ENCODE measurements at regions of chr2 and their contacts with region 1.

Region 1: GRCh38 chr2:222572751-222573174 is 83.1 kb downstream of the FARSB start:
- DNase-seq: no peak
- H3K4me3 Mint-ChIP-seq: no peak overlapping the region
- H3K27ac Mint-ChIP-seq: peak overlapping the region; percentile 54
- H3K4me1 Mint-ChIP-seq: peaks cover 19% of the 10 kb centered on the region
- H3K27me3 Mint-ChIP-seq: no peaks in the 10 kb centered on the region

Region 2: GRCh38 chr2:222613715-222614331 is 41.1 kb after region 1 on chr2:
- intact Hi-C with region 1: loop called (anchors 5 kb)
- DNase-seq: no peak
- H3K4me3 Mint-ChIP-seq: no peak overlapping the region
- H3K27ac Mint-ChIP-seq: no peak overlapping the region
- H3K4me1 Mint-ChIP-seq: peaks cover 4% of the 10 kb centered on the region
- H3K27me3 Mint-ChIP-seq: no peaks in the 10 kb centered on the region

Region 3: GRCh38 chr2:222641336-222641735 is 68.6 kb after region 1 on chr2:
- intact Hi-C with region 1: no loop called
- DNase-seq: no peak
- H3K4me3 Mint-ChIP-seq: no peak overlapping the region
- H3K27ac Mint-ChIP-seq: no peak overlapping the region
- H3K4me1 Mint-ChIP-seq: peaks cover 17% of the 10 kb centered on the region
- H3K27me3 Mint-ChIP-seq: no peaks in the 10 kb centered on the region

Measured in activated T-helper 2 cell treated with anti-CD3 and anti-CD28 coated beads, Interferon-gamma antibody, Interleukin-2, Interleukin-4, amounts not matched to agents 10 μg/mL and 5 μg/mL and 100 μg/mL, durations not matched to agents 14 hours and 24 hours and 36 hours (primary cell).